Endothelial cell of umbilical vein (primary cell): ENCODE measurements at regions of chr18 and their contacts with region 1.

Region 1: GRCh38 chr18:10928772-10929373 is 220.5 kb downstream of the PIEZO2 start:
- DNase-seq: no peak
- H3K4me3 ChIP-seq: no peak overlapping the region
- H3K27ac ChIP-seq: peak overlapping the region; percentile 93
- H3K4me1 ChIP-seq: peaks cover 40% of the 10 kb centered on the region
- H3K27me3 ChIP-seq: no peaks in the 10 kb centered on the region
- CTCF ChIP-seq: no peak
- POLR2A ChIP-seq: no peak

Region 2: DNA sequence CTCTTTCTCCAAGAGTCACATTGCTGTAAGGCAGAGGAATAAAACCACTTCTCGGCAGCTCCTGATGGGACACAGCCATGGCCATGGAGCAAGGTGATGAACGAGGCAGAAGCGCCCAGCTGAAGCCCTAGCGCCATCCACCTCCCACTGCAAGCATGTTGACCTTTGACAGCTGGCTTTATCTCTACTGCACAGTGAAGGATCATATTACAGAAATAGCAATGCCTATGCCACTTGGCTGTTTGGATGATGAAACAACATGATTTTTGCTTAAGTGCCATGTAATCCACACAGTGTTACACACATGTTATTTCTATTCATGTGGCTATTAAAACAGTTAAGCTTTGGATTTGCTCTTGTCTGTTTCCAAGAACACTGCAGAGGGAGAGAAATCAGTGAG is 847.4 kb before region 1 on chr18:
- CTCF ChIA-PET with region 1: no interaction called
- POLR2A ChIA-PET with region 1: no interaction called
- dilution Hi-C with region 1: no loop called
- intact Hi-C with region 1: no loop called
- DNase-seq: no peak
- H3K4me3 ChIP-seq: no peak overlapping the region
- H3K27ac ChIP-seq: no peak overlapping the region
- H3K4me1 ChIP-seq: no peaks in the 10 kb centered on the region
- H3K27me3 ChIP-seq: no peaks in the 10 kb centered on the region
- CTCF ChIP-seq: no peak
- POLR2A ChIP-seq: no peak

Region 3: GRCh38 chr18:10892786-10893185 is 36.1 kb before region 1 on chr18:
- CTCF ChIA-PET with region 1: no interaction called
- POLR2A ChIA-PET with region 1: no interaction called
- dilution Hi-C with region 1: no loop called
- intact Hi-C with region 1: no loop called
- DNase-seq: no peak
- H3K4me3 ChIP-seq: no peak overlapping the region
- H3K27ac ChIP-seq: no peak overlapping the region
- H3K4me1 ChIP-seq: no peaks in the 10 kb centered on the region
- H3K27me3 ChIP-seq: no peaks in the 10 kb centered on the region
- CTCF ChIP-seq: no peak
- POLR2A ChIP-seq: no peak

Region 4: DNA sequence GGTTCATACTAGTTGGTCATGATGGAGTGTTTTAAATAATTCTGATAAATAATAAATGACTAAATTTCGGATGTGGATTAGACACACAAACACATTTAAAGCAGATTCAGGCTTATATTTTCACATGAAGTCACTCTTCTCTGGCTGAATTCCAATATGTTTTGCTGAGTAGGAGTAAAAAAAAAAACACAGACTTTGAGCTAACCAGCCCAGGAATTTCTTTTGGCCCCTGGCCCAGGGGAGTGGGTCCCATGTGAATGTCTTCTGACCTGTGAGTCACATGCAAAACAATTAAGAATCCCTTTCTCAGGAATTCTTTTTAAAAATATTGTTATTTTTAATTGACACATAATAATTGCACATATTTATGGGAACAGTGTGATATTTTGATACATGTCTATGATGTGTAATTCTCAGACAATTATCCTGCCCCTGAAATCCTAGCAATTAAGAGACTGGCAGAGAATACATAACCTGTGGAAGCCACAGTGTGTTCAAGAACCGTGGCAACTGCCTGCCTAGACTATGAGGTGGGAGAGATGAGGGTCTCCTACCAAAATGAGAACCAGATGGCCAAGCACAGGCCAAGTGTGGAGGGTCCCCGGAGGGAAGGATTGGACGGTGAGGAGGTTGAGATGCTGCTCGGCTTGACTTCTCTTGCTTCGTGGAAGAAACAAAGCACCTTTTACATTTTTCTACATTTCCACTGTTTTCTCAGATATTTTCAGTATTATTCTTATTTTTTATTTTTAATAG is 15.9 kb before region 1 on chr18:
- CTCF ChIA-PET with region 1: interaction called, 14 read pairs
- POLR2A ChIA-PET with region 1: no interaction called
- dilution Hi-C with region 1: no loop called
- intact Hi-C with region 1: loop called (anchors 1 kb)
- DNase-seq: peak; percentile 97
- H3K4me3 ChIP-seq: no peak overlapping the region
- H3K27ac ChIP-seq: peak overlapping the region; percentile 98
- H3K4me1 ChIP-seq: peaks cover 19% of the 10 kb centered on the region
- H3K27me3 ChIP-seq: no peaks in the 10 kb centered on the region
- CTCF ChIP-seq: no peak
- POLR2A ChIP-seq: no peak

Region 5: GRCh38 chr18:10979411-10979810 is 50.5 kb after region 1 on chr18:
- CTCF ChIA-PET with region 1: no interaction called
- POLR2A ChIA-PET with region 1: no interaction called
- dilution Hi-C with region 1: no loop called
- intact Hi-C with region 1: loop called (anchors 5 kb)
- DNase-seq: peak; percentile 38
- H3K4me3 ChIP-seq: peak overlapping the region in 1 of 3 experiments; percentile 55
- H3K27ac ChIP-seq: peak overlapping the region; percentile 2
- H3K4me1 ChIP-seq: peaks cover 29% of the 10 kb centered on the region
- H3K27me3 ChIP-seq: no peaks in the 10 kb centered on the region
- CTCF ChIP-seq: no peak
- POLR2A ChIP-seq: no peak

Region 6: GRCh38 chr18:11005528-11005927 is 76.7 kb after region 1 on chr18:
- CTCF ChIA-PET with region 1: interaction called, 5 read pairs
- POLR2A ChIA-PET with region 1: no interaction called
- dilution Hi-C with region 1: no loop called
- intact Hi-C with region 1: loop called (anchors 1 kb)
- DNase-seq: peak; percentile 95
- H3K4me3 ChIP-seq: peak overlapping the region in 1 of 3 experiments; percentile 5
- H3K27ac ChIP-seq: peak overlapping the region; percentile 87
- H3K4me1 ChIP-seq: peaks cover 43% of the 10 kb centered on the region
- H3K27me3 ChIP-seq: no peaks in the 10 kb centered on the region
- CTCF ChIP-seq: no peak
- POLR2A ChIP-seq: no peak